ENCODE measurements at regions of chr15 and their contacts with region 1.

Region 1: GRCh38 chr15:74873036-74873755 is at the start of gene SCAMP2:
- DNase-seq: peak; percentile 92 to 96
- H3K4me3 ChIP-seq: peak within 1 kb of the TSS; percentile 81
- H3K4me3 Mint-ChIP-seq: peak within 1 kb of the TSS; percentile 82
- H3K27ac Mint-ChIP-seq: peak within 1 kb of the TSS; percentile 81
- H3K4me1 ChIP-seq: peaks cover 33% of the 10 kb centered on the region
- H3K4me1 Mint-ChIP-seq: peaks cover 17% of the 10 kb centered on the region
- H3K27me3 ChIP-seq: no peaks in the 10 kb centered on the region
- H3K27me3 Mint-ChIP-seq: no peaks in the 10 kb centered on the region
- CTCF ChIP-seq: no peak
- total RNA-seq, gene SCAMP2: 97.4 and 98.5 TPM in 2 replicates

Region 2: GRCh38 chr15:74664028-74664616 is 209.1 kb before region 1 on chr15:
- CTCF ChIA-PET with region 1: no interaction called
- POLR2A ChIA-PET with region 1: no interaction called
- intact Hi-C with region 1: no loop called
- DNase-seq: peak; percentile 16 to 37
- H3K4me3 ChIP-seq: no peak overlapping the region
- H3K4me3 Mint-ChIP-seq: no peak overlapping the region
- H3K27ac Mint-ChIP-seq: peak overlapping the region; percentile 57
- H3K4me1 ChIP-seq: peaks cover 19% of the 10 kb centered on the region
- H3K4me1 Mint-ChIP-seq: peaks cover 10% of the 10 kb centered on the region
- H3K27me3 ChIP-seq: no peaks in the 10 kb centered on the region
- H3K27me3 Mint-ChIP-seq: no peaks in the 10 kb centered on the region
- CTCF ChIP-seq: no peak

Region 3: GRCh38 chr15:74835307-74835823 is 37.8 kb before region 1 on chr15:
- CTCF ChIA-PET with region 1: no interaction called
- POLR2A ChIA-PET with region 1: no interaction called
- intact Hi-C with region 1: no loop called
- DNase-seq: peak; percentile 76 to 88
- H3K4me3 ChIP-seq: no peak overlapping the region
- H3K4me3 Mint-ChIP-seq: no peak overlapping the region
- H3K27ac Mint-ChIP-seq: no peak overlapping the region
- H3K4me1 ChIP-seq: no peaks in the 10 kb centered on the region
- H3K4me1 Mint-ChIP-seq: no peaks in the 10 kb centered on the region
- H3K27me3 ChIP-seq: no peaks in the 10 kb centered on the region
- H3K27me3 Mint-ChIP-seq: no peaks in the 10 kb centered on the region
- CTCF ChIP-seq: peak; percentile 57 to 83

Region 4: DNA sequence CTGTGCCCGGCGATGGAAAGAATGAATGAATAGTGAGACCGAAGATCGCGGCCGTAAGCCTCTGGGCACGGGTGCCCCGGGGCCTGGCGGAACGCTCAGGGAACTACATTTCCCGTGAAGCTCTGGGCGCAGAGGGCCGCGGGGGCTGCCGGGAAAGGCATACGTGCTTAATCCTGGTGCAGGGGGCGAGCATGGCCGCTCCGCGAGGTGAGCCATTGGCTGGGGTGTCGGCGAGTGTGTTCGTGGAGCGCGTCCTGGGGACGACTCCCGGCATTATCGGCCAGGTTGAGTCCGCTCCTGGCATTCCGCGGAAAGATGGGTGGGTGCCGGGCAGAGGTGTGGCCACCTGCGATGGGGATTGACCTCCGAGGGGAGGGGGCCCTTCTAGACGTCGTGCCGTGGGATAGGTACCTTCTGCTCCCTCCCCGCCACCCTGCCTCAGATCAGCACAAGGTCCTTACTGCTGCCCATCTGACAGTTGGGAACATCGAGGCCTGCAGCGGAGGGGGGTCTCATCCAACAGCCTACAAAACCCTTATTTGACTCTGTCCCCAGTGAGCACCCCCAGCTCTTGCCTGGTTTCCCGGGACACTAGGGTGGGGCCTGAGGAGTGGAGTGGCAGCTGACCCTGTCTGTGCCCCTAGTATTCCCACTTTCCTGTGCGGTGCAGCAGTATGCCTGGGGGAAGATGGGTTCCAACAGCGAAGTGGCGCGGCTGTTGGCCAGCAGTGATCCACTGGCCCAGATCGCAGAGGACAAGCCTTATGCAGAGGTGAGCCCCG is 16.9 kb after region 1 on chr15 and contains the start of gene MPI:
- CTCF ChIA-PET with region 1: no interaction called
- POLR2A ChIA-PET with region 1: interaction called, 4 read pairs
- intact Hi-C with region 1: loop called (anchors 1 kb)
- DNase-seq: peak; percentile 86 to 87
- H3K4me3 ChIP-seq: peak within 1 kb of the TSS; percentile 95
- H3K4me3 Mint-ChIP-seq: peak within 1 kb of the TSS; percentile 75
- H3K27ac Mint-ChIP-seq: peak within 1 kb of the TSS; percentile 64
- H3K4me1 ChIP-seq: peaks cover 11% of the 10 kb centered on the region; the same call in 1 of the 2 replicates
- H3K4me1 Mint-ChIP-seq: peaks cover 11% of the 10 kb centered on the region
- H3K27me3 ChIP-seq: no peaks in the 10 kb centered on the region
- H3K27me3 Mint-ChIP-seq: no peaks in the 10 kb centered on the region
- CTCF ChIP-seq: no peak
- total RNA-seq, gene MPI: 29.1 and 32.0 TPM in 2 replicates

Region 5: GRCh38 chr15:74920456-74920855 is 47.3 kb after region 1 on chr15:
- CTCF ChIA-PET with region 1: no interaction called
- POLR2A ChIA-PET with region 1: no interaction called
- intact Hi-C with region 1: no loop called
- DNase-seq: no peak
- H3K4me3 ChIP-seq: no peak overlapping the region
- H3K4me3 Mint-ChIP-seq: no peak overlapping the region
- H3K27ac Mint-ChIP-seq: no peak overlapping the region
- H3K4me1 ChIP-seq: no peaks in the 10 kb centered on the region
- H3K4me1 Mint-ChIP-seq: no peaks in the 10 kb centered on the region
- H3K27me3 ChIP-seq: no peaks in the 10 kb centered on the region
- H3K27me3 Mint-ChIP-seq: no peaks in the 10 kb centered on the region
- CTCF ChIP-seq: no peak

Region 6: GRCh38 chr15:75178171-75179075 is 305.2 kb after region 1 on chr15:
- CTCF ChIA-PET with region 1: no interaction called
- POLR2A ChIA-PET with region 1: no interaction called
- intact Hi-C with region 1: no loop called
- DNase-seq: peak; percentile 66 to 73
- H3K4me3 ChIP-seq: peak overlapping the region; percentile 2; the same call in 1 of the 2 replicates
- H3K4me3 Mint-ChIP-seq: peak overlapping the region; percentile 47
- H3K27ac Mint-ChIP-seq: no peak overlapping the region
- H3K4me1 ChIP-seq: peaks cover 72% of the 10 kb centered on the region
- H3K4me1 Mint-ChIP-seq: peaks cover 48% of the 10 kb centered on the region
- H3K27me3 ChIP-seq: no peaks in the 10 kb centered on the region
- H3K27me3 Mint-ChIP-seq: no peaks in the 10 kb centered on the region
- CTCF ChIP-seq: no peak